HAP-1 (cell line): ENCODE measurements at regions of chr7 and their contacts with region 1.

Region 1: GRCh38 chr7:80428161-80429054 is 83.5 kb downstream of the GNAT3 start:
- DNase-seq: peak; percentile 56 to 90
- H3K4me3 ChIP-seq: no peak overlapping the region
- H3K4me1 ChIP-seq: peaks cover 38% of the 10 kb centered on the region
- H3K27me3 ChIP-seq: no peaks in the 10 kb centered on the region

Region 2: DNA sequence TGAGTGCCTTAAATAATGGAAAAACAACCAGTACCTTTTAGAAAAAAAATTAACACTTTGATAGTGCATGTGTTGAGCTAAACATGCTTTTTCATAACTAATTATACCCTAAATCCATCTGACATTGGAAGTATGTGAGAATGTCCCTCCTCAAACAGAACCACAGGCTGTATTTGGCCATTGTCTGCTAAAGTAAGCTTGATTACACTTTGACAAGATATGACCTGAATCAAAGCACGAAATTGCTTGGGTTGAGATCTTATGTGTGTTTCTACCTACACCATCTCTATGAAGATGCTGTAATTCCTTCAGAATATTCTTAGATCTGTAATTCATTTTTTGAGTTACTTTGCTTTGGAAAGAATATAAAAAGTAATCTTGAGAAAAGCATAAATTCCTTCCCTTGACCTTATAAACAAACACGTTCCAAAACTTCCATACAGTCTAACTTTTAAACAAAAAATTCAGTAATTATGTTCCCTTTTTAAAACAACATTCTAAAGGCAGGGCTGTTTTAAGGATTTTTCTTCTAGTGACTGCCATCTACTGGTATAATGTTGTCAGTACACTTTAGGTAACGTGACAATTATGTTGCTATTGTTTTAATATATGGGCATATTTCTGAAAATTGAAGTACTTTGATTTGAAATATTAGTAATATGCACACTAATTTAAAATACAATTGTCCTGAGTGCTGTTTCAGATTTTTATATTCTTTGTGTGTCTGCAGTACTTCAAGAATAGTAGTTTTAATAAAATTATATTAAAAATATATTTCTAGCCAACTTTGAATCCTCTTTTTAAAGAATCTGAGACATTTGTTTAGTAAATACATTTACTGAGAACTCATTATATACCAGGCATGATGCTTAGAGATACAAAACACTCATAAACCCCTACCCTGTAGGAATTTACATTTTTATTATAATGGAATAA is 231.0 kb after region 1 on chr7:
- in situ Hi-C with region 1: loop called (anchors 25 kb)
- DNase-seq: peak in 1 of 2 experiments; percentile 36
- H3K4me3 ChIP-seq: no peak overlapping the region
- H3K4me1 ChIP-seq: peaks cover 6% of the 10 kb centered on the region
- H3K27me3 ChIP-seq: no peaks in the 10 kb centered on the region

Region 3: GRCh38 chr7:81469869-81470723 is 1041.7 kb after region 1 on chr7:
- in situ Hi-C with region 1: loop called (anchors 25 kb)
- DNase-seq: peak; percentile 76 to 83
- H3K4me3 ChIP-seq: no peak overlapping the region
- H3K4me1 ChIP-seq: no peaks in the 10 kb centered on the region
- H3K27me3 ChIP-seq: no peaks in the 10 kb centered on the region